HEK293 (cell line): ENCODE measurements at regions of chr16 and their contacts with region 1.

Region 1: GRCh38 chr16:27367461-27368357 is 34.3 kb upstream of the IL21R start:
- H3K4me3 ChIP-seq: no peak overlapping the region
- H3K27ac ChIP-seq: no peak overlapping the region
- H3K4me1 ChIP-seq: no peaks in the 10 kb centered on the region; the same call in 1 of the 2 replicates
- CTCF ChIP-seq: peak; percentile 67

Region 2: GRCh38 chr16:27154705-27155521 is 212.8 kb before region 1 on chr16:
- CTCF ChIA-PET with region 1: interaction called, 12 read pairs
- POLR2A ChIA-PET with region 1: no interaction called
- H3K4me3 ChIP-seq: no peak overlapping the region
- H3K27ac ChIP-seq: no peak overlapping the region
- H3K4me1 ChIP-seq: no peaks in the 10 kb centered on the region
- CTCF ChIP-seq: peak; percentile 76

Region 3: DNA sequence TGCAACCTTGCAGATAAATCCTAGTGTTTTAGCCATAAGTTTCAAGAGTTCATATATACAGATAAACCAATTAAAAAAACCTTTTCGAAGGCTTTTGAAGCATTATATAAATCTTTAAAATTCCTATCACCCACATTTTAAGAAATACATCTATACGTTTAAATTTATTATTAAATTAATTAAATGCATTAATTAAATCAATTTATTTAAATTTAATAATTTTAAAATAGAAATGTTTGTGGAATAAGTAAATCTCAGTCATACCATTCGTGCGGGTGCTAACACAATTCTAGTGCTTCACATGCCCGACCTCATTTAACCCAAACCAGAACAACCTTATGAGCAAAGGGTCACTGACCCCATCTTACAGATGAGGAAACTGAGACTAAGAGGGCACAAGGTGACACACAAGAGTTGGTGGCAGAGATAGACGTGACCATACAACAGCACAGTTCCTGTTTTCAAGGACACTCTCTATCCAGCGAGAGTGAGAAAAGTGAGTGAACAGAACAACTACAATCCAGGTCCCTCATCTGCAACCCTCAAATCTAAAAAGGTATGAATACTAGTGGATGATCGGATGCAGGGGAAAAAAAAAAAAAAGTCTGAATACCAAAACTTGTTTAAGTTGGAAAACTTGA is 100.6 kb before region 1 on chr16:
- CTCF ChIA-PET with region 1: no interaction called
- POLR2A ChIA-PET with region 1: no interaction called
- H3K4me3 ChIP-seq: no peak overlapping the region
- H3K27ac ChIP-seq: no peak overlapping the region
- H3K4me1 ChIP-seq: no peaks in the 10 kb centered on the region
- CTCF ChIP-seq: no peak

Region 4: DNA sequence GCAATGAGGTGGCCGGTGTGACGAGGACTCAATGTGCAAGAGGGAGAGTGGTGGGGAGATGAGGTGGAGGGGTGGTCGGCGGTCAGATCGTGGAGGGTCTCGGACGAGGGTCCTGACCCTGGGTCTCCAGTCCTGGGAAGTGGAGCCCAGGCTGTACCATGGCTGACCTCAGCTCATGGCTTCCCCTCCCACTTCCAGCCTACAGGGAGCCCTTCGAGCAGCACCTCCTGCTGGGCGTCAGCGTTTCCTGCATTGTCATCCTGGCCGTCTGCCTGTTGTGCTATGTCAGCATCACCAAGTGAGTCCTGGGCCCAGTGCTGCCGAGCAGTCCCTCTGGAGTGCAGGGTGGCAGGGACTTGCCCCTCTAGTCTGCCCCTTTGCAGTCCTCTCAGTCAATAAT is 12.1 kb before region 1 on chr16:
- CTCF ChIA-PET with region 1: interaction called, 13 read pairs
- POLR2A ChIA-PET with region 1: no interaction called
- H3K4me3 ChIP-seq: no peak overlapping the region
- H3K27ac ChIP-seq: no peak overlapping the region
- H3K4me1 ChIP-seq: no peaks in the 10 kb centered on the region
- CTCF ChIP-seq: 0 out of 2 replicates have a peak, but pooled peaks have one; percentile 9

Region 5: DNA sequence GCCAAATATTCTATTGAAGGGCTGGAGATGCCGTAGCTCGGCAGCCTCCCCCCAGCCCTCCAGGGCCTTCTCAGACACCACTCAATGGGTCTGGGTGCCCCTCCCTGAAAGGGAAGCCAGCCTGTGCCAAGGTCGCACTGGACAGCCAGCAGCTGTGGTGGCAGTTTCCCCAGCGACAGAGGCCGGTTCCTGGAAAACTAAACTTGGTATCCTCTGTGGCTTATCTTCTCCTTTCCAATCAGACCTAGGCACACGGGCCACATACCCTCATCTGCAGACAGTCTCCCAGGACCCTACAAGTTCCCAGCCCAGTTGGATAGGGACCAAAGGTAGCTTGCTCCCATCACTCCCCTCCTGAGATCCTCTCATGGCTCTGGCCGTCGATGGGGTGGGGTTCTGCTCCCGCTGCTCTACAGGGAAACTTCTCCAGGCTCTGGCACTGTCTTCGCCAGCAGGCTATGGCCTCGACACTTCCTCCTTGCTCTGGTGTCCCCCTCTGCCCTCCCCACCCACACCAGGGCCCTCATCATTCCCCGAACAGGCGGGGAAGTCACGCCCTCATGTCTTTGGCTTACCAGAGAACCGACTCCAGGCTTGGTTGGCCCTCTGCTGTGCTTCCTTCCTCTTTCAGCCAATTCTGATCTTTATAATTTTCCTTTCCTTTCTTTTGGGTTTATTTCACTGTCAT is 16.0 kb after region 1 on chr16:
- CTCF ChIA-PET with region 1: no interaction called
- POLR2A ChIA-PET with region 1: no interaction called
- H3K4me3 ChIP-seq: no peak overlapping the region
- H3K27ac ChIP-seq: no peak overlapping the region
- H3K4me1 ChIP-seq: no peaks in the 10 kb centered on the region
- CTCF ChIP-seq: no peak